ENCODE measurements at regions of chr2 and their contacts with region 1.

Region 1: GRCh38 chr2:12293874-12294273 is 422.9 kb upstream of the TRIB2 start:
- DNase-seq: peak; percentile 15
- H3K4me3 Mint-ChIP-seq: no peak overlapping the region
- H3K27ac Mint-ChIP-seq: peak overlapping the region; percentile 64
- H3K4me1 Mint-ChIP-seq: peaks cover 54% of the 10 kb centered on the region
- H3K27me3 Mint-ChIP-seq: peaks cover 18% of the 10 kb centered on the region

Region 2: DNA sequence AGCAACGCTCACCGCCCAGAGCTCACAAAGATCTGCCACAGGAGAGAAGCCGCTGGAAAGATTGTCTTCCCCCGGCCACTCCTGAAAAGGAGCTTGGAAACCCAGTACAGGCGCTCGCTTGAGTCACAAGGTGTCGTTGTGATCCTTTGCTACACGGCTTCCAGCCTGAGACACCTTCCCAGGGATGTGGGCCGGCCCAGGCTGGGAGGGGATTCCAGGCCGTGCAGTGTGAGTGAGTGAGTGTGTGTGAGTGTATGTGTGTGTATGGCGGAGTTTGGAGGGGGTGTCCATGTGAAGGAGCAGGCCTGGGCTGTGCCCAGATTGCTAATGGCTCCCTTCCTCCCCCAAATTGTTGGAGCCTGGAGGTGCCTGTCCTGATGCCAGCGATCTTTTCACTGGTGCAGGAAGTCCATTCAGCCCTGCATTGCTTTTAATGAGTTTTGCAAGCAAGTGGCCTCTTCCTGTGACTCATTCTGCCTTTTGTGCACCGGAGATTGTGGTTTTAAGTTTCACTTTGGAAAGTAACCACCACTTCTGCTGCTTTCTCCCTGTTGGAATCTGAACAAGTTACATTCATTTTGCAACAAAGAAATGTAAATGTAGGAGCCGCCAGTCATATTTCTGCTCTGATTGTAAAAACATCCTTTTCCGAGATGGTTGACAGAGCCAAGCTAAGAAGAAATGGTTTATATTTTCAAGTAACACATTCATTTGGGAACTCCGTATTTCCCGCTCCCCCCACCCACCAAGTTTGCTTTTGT is 463.7 kb before region 1 on chr2:
- intact Hi-C with region 1: loop called (anchors 1 kb)
- DNase-seq: peak; percentile 61
- H3K4me3 Mint-ChIP-seq: peak overlapping the region; percentile 51
- H3K27ac Mint-ChIP-seq: peak overlapping the region; percentile 56
- H3K4me1 Mint-ChIP-seq: peaks cover 31% of the 10 kb centered on the region
- H3K27me3 Mint-ChIP-seq: peaks cover 37% of the 10 kb centered on the region

Region 3: GRCh38 chr2:12176623-12177454 is 117.0 kb before region 1 on chr2:
- intact Hi-C with region 1: loop called (anchors 5 kb)
- DNase-seq: no peak
- H3K4me3 Mint-ChIP-seq: no peak overlapping the region
- H3K27ac Mint-ChIP-seq: no peak overlapping the region
- H3K4me1 Mint-ChIP-seq: peaks cover 24% of the 10 kb centered on the region
- H3K27me3 Mint-ChIP-seq: peaks cover 14% of the 10 kb centered on the region

Region 4: DNA sequence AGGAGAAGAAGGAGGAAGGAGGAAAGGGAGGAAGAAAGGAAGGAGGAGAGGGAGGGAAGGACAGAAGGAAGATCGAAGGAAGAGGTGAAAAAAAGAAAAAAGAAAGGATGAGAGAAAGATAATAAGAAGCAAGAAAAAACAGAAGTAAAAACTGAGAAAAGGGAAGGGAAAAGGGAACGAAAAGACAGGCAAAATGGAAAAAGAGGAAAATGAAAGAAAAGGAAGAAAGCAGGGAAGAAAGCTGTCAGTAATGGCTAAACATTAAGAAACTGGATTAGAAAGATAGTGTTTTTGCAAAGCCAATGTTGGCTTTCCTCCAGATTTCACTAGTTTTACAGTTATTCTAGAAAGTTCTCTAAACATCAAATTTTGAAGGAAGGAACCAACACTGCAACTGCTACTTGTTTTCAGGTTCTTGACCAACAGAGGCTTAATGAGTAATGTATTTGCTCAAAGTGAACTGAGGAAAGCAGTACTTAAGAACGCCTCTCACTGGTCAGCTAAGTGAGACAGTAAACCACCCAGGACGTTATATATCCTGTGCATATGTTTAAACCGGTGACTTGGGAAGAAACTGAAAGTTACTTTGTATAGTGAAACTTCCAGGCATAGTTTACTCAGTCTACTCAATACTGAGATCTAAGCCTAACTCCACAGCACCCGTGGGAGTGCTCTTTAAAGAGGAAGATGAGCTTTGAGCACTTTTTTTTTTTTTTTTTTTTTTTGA is 136.7 kb after region 1 on chr2:
- intact Hi-C with region 1: loop called (anchors 2 kb)
- DNase-seq: no peak
- H3K4me3 Mint-ChIP-seq: peak overlapping the region; percentile 18
- H3K27ac Mint-ChIP-seq: peak overlapping the region; percentile 63
- H3K4me1 Mint-ChIP-seq: peaks cover 29% of the 10 kb centered on the region
- H3K27me3 Mint-ChIP-seq: no peaks in the 10 kb centered on the region

Region 5: DNA sequence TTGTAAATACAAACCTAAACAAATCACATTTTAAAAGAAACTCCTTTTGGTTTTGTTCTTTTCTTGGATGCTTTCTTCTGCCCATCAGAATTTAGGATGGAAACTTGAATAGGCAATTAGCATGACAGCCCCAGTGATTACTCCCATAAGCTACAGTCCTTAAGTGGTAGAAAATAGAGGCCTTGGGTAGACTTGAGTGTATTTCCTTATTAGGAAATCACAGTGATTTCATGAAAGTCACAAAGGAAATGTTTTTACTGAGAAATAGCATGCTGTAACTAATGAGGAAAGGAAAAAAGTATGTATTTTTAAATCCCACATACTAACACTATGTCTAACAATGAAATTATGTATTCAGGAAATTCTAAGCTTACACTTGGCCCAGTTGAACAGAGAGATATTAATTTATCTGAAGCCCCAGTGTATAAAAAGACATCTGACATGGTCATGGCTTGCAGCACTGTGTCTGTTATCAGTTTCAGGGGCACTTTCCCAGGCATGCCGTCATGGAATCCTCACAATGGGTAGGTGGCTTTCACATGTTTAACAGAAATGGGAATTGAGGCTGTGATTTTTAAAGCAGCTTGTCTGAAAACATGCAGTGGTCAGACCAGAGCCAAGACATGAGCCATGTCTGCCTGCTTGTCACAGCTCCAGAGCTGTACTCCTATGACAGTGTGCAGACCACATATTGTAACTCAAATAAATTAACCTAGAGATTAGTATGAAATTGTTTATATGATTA is 343.1 kb after region 1 on chr2:
- intact Hi-C with region 1: loop called (anchors 5 kb)
- DNase-seq: no peak
- H3K4me3 Mint-ChIP-seq: no peak overlapping the region
- H3K27ac Mint-ChIP-seq: no peak overlapping the region
- H3K4me1 Mint-ChIP-seq: peaks cover 38% of the 10 kb centered on the region
- H3K27me3 Mint-ChIP-seq: no peaks in the 10 kb centered on the region

Region 6: GRCh38 chr2:12728221-12728777 is 434.4 kb after region 1 on chr2:
- intact Hi-C with region 1: loop called (anchors 1 kb)
- DNase-seq: peak; percentile 75
- H3K4me3 Mint-ChIP-seq: peak overlapping the region; percentile 45
- H3K27ac Mint-ChIP-seq: peak overlapping the region; percentile 25
- H3K4me1 Mint-ChIP-seq: peaks cover 56% of the 10 kb centered on the region
- H3K27me3 Mint-ChIP-seq: no peaks in the 10 kb centered on the region

Region 7: GRCh38 chr2:12965540-12966269 is 671.8 kb after region 1 on chr2:
- intact Hi-C with region 1: loop called (anchors 5 kb)
- DNase-seq: no peak
- H3K4me3 Mint-ChIP-seq: peak overlapping the region; percentile 2
- H3K27ac Mint-ChIP-seq: peak overlapping the region; percentile 48
- H3K4me1 Mint-ChIP-seq: peaks cover 49% of the 10 kb centered on the region
- H3K27me3 Mint-ChIP-seq: peaks cover 11% of the 10 kb centered on the region